Sigmoid colon (tissue), 7 donors: ENCODE measurements at regions of chr1 and their contacts with region 1.

Region 1: DNA sequence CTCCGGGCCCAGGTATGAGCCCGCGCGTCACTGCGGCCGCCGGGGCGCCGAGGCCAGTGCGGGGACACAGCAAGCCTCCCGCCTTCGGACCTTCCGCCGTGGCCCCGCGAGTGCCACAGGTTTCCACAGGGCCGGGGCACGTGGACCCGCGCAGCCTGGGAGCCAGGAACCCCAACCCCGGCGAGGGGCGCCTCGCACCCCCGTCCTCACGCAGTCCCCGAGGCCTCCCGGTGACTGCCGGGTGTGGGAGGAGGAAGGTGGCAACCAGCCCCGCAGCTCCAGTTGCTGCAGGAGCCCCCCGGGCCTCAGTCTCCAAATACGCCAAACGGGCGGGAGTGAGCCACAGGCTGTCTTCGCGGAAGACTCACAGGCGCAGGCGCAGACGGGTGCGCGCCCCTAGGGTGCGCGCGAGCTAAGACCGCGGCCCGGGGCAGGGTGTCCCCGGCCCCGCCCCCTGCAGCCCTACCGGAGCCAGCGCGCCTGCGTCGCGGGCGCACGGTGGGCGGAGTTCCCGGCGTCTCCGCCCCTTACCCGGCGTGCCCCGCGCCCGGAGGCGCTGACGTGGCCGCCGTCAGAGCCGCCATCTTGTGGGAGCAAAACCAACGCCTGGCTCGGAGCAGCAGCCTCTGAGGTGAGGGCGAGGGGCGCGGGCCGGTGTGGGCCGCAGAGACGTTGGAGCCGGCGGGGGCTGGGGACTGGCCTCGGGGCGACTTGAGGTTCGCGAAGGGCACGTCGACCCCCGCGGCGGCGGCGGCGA is at the start of gene ARF1:
- DNase-seq: peak; percentile 96
- H3K4me3 ChIP-seq: peak within 1 kb of the TSS; percentile 77 to 99 (median 90)
- H3K27ac ChIP-seq: peak within 1 kb of the TSS; percentile 94 to 99 (median 98)
- H3K4me1 ChIP-seq: peaks cover 1 to 60% (median 52%) of the 10 kb centered on the region in 4 donors
- H3K27me3 ChIP-seq: no peaks in the 10 kb centered on the region
- CTCF ChIP-seq: no peak
- EP300 ChIP-seq: no peak
- POLR2A ChIP-seq: peak; percentile 38 to 46
- total RNA-seq, gene ARF1: 212 to 250 (median 225) TPM

Region 2: GRCh38 chr1:227734856-227735538 is 347.3 kb before region 1 on chr1 and contains the starts of genes JMJD4 and SNAP47:
- intact Hi-C with region 1: loop called (anchors 5 kb)
- DNase-seq: peak; percentile 96
- H3K4me3 ChIP-seq: peak within 1 kb of the TSS; percentile 72 to 97 (median 81)
- H3K27ac ChIP-seq: peak within 1 kb of the TSS; percentile 84 to 89 (median 88)
- H3K4me1 ChIP-seq: peaks cover 0 to 44% (median 38%) of the 10 kb centered on the region in 4 donors
- H3K27me3 ChIP-seq: no peaks in the 10 kb centered on the region
- CTCF ChIP-seq: no peak
- EP300 ChIP-seq: no peak
- POLR2A ChIP-seq: peak; percentile 63 to 83
- total RNA-seq, gene JMJD4: 13.8 to 20.5 (median 14.8) TPM
- total RNA-seq, gene SNAP47: 33.9 to 51.6 (median 35.8) TPM

Region 3: DNA sequence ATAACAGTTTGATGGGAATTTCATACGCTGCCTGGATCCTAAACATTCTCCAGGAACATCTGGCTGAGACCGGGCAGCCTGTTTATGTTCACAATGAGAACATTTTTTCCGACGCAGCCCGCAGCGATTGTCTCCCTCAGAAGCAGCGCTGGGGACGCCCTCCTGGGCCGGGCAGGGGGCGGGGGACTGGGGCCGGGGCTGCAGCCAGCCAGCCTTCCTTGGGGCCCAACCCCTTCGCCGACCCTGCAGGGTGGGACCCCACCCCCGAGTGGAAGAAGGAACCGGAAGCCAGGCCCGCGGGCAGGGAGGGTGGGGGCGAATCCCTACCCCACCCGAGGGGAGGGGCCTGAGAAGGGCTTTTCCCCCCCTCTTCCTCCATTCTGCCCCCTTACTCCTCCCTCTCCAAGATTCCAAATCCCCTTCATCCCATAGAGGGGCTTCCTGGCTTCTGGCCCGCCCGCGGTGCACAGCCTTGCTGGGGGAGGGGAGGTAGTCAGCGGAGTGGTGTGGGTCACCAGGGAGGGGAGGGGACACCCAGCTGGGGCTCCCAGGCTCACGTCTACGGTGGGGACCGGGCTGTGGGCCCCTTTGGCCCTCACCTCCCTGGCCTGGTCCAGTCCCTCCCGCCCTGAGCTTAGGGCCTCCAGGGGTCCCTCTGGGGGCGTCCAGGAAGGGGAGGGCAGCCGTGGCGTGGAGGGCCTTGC is 195.2 kb before region 1 on chr1:
- intact Hi-C with region 1: loop called (anchors 5 kb)
- DNase-seq: peak; percentile 92
- H3K4me3 ChIP-seq: peak overlapping the region; percentile 52 to 72 (median 62)
- H3K27ac ChIP-seq: peak overlapping the region; percentile 91 to 99 (median 96)
- H3K4me1 ChIP-seq: peaks cover 0 to 33% (median 22%) of the 10 kb centered on the region in 4 donors
- H3K27me3 ChIP-seq: no peaks in the 10 kb centered on the region
- CTCF ChIP-seq: no peak
- EP300 ChIP-seq: peak in 2 of 4 donors; percentile 69 to 70
- POLR2A ChIP-seq: peak in 1 of 2 donors; percentile 13

Region 4: GRCh38 chr1:228102791-228103620 is 20.7 kb after region 1 on chr1 and contains the start of gene C1orf35:
- intact Hi-C with region 1: loop called (anchors 1 kb)
- DNase-seq: peak; percentile 97
- H3K4me3 ChIP-seq: peak within 1 kb of the TSS; percentile 70 to 92 (median 78)
- H3K27ac ChIP-seq: peak within 1 kb of the TSS; percentile 88 to 98 (median 95)
- H3K4me1 ChIP-seq: peaks cover 0 to 45% (median 32%) of the 10 kb centered on the region in 4 donors
- H3K27me3 ChIP-seq: no peaks in the 10 kb centered on the region
- CTCF ChIP-seq: no peak
- EP300 ChIP-seq: peak in 1 of 4 donors; percentile 63
- POLR2A ChIP-seq: peak; percentile 48 to 55
- total RNA-seq, gene C1orf35: 7.8 to 18.1 (median 13.0) TPM

Region 5: GRCh38 chr1:228139944-228140656 is 57.8 kb after region 1 on chr1 and contains the start of gene GUK1:
- intact Hi-C with region 1: no loop called
- DNase-seq: peak; percentile 100
- H3K4me3 ChIP-seq: peak within 1 kb of the TSS; percentile 70 to 96 (median 88)
- H3K27ac ChIP-seq: peak within 1 kb of the TSS; percentile 93 to 99 (median 96)
- H3K4me1 ChIP-seq: peaks cover 0 to 39% (median 38%) of the 10 kb centered on the region in 4 donors
- H3K27me3 ChIP-seq: no peaks in the 10 kb centered on the region
- CTCF ChIP-seq: peak in 1 of 4 experiments; percentile 15
- EP300 ChIP-seq: peak in 2 of 4 donors; percentile 8 to 95
- POLR2A ChIP-seq: peak; percentile 87 to 95
- total RNA-seq, gene GUK1: 225 to 366 (median 303) TPM

Region 6: GRCh38 chr1:228434686-228435085 is 352.4 kb after region 1 on chr1:
- intact Hi-C with region 1: no loop called
- DNase-seq: no peak
- H3K4me3 ChIP-seq: no peak overlapping the region
- H3K27ac ChIP-seq: no peak overlapping the region
- H3K4me1 ChIP-seq: no peaks in the 10 kb centered on the region
- H3K27me3 ChIP-seq: peaks cover 0 to 95% (median 21%) of the 10 kb centered on the region in 3 donors
- CTCF ChIP-seq: no peak
- EP300 ChIP-seq: no peak
- POLR2A ChIP-seq: no peak

Region 7: DNA sequence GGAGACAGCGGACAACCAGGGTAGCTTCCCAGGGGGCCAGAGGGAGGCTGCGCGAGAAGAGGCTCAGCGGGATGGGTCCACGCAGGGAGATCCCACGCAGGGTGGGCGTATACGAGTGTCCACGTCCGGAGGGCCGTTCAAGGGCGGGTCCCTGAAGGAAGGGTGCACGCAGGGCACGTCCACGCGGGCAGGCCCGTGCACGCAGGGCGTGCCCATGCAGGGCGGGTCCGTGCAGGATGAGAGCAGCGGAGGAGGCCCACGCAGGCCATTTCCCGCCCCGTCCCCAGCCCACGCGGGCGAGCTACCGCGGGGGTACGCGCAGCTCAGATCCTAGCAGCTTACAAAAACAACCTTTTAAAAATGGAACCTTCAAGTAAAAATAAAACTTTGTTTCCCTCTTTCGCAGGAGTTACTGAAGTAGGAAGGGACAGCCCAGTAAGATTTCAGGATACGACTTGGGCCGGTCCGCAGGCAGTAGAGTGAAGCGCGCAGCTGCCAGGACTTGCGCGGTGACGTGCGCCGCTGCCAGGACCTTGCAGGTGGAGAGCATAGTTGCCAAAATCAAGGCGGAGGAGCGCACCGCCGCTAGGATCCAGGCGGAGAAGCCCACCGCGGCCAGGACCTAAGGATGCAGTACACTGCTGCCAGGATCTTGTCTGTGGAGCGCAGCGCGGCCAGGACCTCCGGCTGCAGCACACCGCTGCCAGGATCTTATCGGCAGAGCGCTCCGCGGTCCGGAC is 404.5 kb after region 1 on chr1:
- intact Hi-C with region 1: loop called (anchors 5 kb)
- DNase-seq: peak; percentile 83
- H3K4me3 ChIP-seq: peak overlapping the region; percentile 50 to 86 (median 73)
- H3K27ac ChIP-seq: peak overlapping the region; percentile 96 to 99 (median 96)
- H3K4me1 ChIP-seq: peaks cover 4 to 40% (median 29%) of the 10 kb centered on the region in 4 donors
- H3K27me3 ChIP-seq: no peaks in the 10 kb centered on the region
- CTCF ChIP-seq: no peak
- EP300 ChIP-seq: peak in 1 of 4 donors; percentile 54
- POLR2A ChIP-seq: peak in 1 of 2 donors; percentile 29